ENCODE measurements at regions of chr2 and their contacts with region 1.

Region 1: DNA sequence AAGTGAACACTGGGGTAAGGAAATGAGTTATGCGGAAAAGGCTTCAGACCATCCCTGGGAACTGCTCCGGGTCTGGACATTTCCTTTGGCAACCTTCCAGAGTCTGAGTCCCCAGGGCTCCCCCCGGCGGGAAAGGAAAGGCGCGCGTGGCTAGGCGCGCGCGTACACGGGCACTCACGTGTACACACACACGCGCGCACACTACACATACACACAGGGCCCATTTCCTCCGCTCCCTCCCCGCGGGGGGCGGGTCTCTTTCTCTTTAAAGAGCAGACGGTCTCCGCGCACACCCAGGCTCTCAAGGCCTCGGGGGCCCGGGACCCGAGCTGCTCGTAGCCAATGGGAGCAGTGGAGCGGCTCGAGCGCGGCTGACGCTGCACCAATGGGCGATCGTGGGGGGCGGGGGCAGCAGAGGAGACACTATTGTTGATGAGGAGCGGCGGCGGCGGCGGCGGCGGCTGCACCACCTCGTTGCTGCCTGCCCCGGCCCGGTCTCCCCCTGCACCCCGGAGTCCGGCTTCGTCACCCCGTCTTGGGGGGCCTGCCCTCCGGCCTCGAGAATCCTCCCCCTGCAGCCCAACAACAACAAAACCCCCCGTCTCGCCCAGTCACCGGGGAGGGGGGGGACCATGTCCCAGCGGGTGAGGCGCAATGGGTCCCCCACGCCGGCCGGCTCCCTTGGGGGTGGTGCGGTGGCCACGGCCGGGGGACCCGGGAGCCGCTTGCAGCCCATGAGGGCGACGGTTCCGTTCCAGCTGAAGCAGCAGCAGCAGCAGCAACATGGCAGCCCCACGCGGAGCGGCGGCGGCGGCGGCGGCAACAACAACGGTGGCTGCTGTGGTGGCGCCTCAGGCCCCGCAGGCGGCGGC is at the start of gene FAM117B:
- DNase-seq: peak; percentile 97 to 99 (median 98)
- ATAC-seq: peak; percentile 87
- H3K4me3 ChIP-seq: peak within 1 kb of the TSS; percentile 77 to 87
- H3K4me3 Mint-ChIP-seq: peak within 1 kb of the TSS; percentile 98
- H3K27ac ChIP-seq: peak within 1 kb of the TSS; percentile 76 to 89
- H3K27ac Mint-ChIP-seq: peak within 1 kb of the TSS; percentile 99
- H3K4me1 ChIP-seq: peaks cover 29% of the 10 kb centered on the region
- H3K4me1 Mint-ChIP-seq: peaks cover 52% of the 10 kb centered on the region
- H3K27me3 ChIP-seq: no peaks in the 10 kb centered on the region
- H3K27me3 Mint-ChIP-seq: no peaks in the 10 kb centered on the region
- CTCF ChIP-seq: no peak
- total RNA-seq, gene FAM117B: 40.0 to 45.8 TPM

Region 2: DNA sequence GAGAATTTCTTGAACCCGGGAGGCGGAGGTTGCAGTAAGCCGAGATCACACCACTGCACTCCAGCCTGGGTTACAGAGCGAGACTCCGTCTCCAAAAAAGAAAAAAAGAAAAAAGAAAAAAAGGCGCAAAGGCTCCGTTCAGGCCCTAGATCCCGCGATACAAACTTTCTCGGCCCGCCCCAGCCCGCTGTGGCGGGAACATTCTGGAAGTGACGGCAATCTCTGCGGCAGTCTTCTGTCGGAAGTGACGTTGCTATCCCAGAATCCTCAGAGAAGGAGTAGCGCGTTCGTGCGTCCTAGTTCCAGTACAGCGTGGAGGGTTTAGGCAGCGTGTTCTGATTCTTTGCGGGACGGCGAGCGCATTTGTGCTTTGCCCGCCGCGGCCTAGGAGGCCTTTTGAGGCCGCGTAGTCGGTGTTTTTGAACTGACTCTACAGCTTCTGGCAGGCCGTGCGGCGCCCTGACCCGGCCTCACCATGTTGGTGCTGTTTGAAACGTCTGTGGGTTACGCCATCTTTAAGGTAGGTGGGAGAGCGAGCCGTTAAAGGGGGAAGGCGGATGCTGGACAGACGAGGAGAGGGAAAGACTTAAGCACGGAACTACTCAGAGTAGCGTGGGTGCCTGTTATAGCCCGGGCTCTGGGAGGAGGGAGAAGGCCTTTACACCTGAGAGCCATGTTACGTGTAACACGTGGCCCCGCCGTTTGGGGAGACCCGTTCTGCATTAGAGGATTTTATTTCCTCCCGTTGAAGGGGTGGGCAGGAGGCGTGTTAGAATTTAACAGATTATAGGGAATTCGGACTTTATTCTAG is 369.1 kb before region 1 on chr2 and contains the start of gene NOP58:
- CTCF ChIA-PET with region 1: no interaction called
- POLR2A ChIA-PET with region 1: no interaction called
- intact Hi-C with region 1: loop called in 1 of 2 experiments (anchors 10 kb)
- DNase-seq: peak; percentile 80 to 97 (median 87)
- ATAC-seq: peak; percentile 75
- H3K4me3 ChIP-seq: peak within 1 kb of the TSS; percentile 80 to 100
- H3K4me3 Mint-ChIP-seq: peak within 1 kb of the TSS; percentile 52
- H3K27ac ChIP-seq: peak within 1 kb of the TSS; percentile 97 to 98
- H3K27ac Mint-ChIP-seq: peak within 1 kb of the TSS; percentile 43
- H3K4me1 ChIP-seq: peaks cover 18% of the 10 kb centered on the region
- H3K4me1 Mint-ChIP-seq: peaks cover 21% of the 10 kb centered on the region
- H3K27me3 ChIP-seq: no peaks in the 10 kb centered on the region
- H3K27me3 Mint-ChIP-seq: no peaks in the 10 kb centered on the region
- CTCF ChIP-seq: no peak
- total RNA-seq, gene NOP58: 345 to 352 TPM

Region 3: DNA sequence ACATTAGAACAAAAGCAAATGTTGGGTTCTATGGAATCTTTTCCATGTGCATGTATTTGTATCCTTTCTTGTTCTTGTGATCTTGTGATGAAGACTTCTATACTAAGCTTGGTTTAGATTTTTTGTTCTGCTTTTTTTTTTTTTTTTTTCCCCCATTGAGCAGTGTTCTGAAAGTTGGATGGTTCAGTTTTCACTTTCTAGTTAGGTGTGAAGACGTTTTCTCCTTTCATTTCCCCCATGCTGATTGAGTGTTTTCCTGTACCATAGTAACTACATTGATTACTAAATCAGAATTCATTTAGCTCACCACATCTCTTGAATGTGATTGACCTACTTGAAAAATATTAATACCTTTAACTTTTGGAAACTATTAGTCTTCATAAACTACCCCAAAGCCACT is 335.1 kb before region 1 on chr2:
- CTCF ChIA-PET with region 1: no interaction called
- POLR2A ChIA-PET with region 1: no interaction called
- intact Hi-C with region 1: no loop called
- DNase-seq: no peak
- ATAC-seq: no peak
- H3K4me3 ChIP-seq: no peak overlapping the region
- H3K4me3 Mint-ChIP-seq: no peak overlapping the region
- H3K27ac ChIP-seq: no peak overlapping the region
- H3K27ac Mint-ChIP-seq: no peak overlapping the region
- H3K4me1 ChIP-seq: no peaks in the 10 kb centered on the region
- H3K4me1 Mint-ChIP-seq: peaks cover 2% of the 10 kb centered on the region
- H3K27me3 ChIP-seq: no peaks in the 10 kb centered on the region
- H3K27me3 Mint-ChIP-seq: no peaks in the 10 kb centered on the region
- CTCF ChIP-seq: no peak

Region 4: DNA sequence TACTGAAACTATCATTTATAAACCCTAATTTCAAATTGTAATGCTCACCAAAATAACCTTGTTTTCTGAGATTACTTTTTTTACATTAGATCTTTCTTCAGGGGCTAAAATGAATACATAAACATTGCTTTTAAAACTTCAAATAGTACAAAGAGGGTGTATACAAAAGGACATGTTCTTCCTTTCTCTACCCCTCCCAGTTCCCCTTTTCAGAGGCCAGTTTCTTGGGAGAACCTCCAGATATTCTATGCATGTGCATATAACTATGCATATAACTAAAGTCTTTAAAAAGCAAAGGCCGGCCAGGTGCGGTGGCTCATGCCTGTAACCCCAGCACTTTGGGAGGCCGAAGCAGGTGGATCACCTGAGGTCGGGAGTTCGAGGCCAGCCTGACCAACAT is 10.7 kb before region 1 on chr2:
- CTCF ChIA-PET with region 1: no interaction called
- POLR2A ChIA-PET with region 1: no interaction called
- intact Hi-C with region 1: no loop called
- DNase-seq: no peak
- ATAC-seq: no peak
- H3K4me3 ChIP-seq: no peak overlapping the region
- H3K4me3 Mint-ChIP-seq: no peak overlapping the region
- H3K27ac ChIP-seq: no peak overlapping the region
- H3K27ac Mint-ChIP-seq: no peak overlapping the region
- H3K4me1 ChIP-seq: peaks cover 21% of the 10 kb centered on the region
- H3K4me1 Mint-ChIP-seq: peaks cover 4% of the 10 kb centered on the region
- H3K27me3 ChIP-seq: no peaks in the 10 kb centered on the region
- H3K27me3 Mint-ChIP-seq: no peaks in the 10 kb centered on the region
- CTCF ChIP-seq: no peak

Region 5: GRCh38 chr2:202653890-202654289 is 19.1 kb after region 1 on chr2:
- CTCF ChIA-PET with region 1: interaction called, 7 read pairs
- POLR2A ChIA-PET with region 1: interaction called, 13 read pairs
- intact Hi-C with region 1: loop called in 1 of 2 experiments (anchors 2 kb)
- DNase-seq: peak in 1 of 9 experiments; percentile 35
- ATAC-seq: no peak
- H3K4me3 ChIP-seq: no peak overlapping the region
- H3K4me3 Mint-ChIP-seq: peak overlapping the region; percentile 9
- H3K27ac ChIP-seq: no peak overlapping the region
- H3K27ac Mint-ChIP-seq: peak overlapping the region; percentile 85
- H3K4me1 ChIP-seq: peaks cover 74% of the 10 kb centered on the region
- H3K4me1 Mint-ChIP-seq: peaks cover 86% of the 10 kb centered on the region
- H3K27me3 ChIP-seq: peaks cover 0 to 2% of the 10 kb centered on the region in 2 experiments
- H3K27me3 Mint-ChIP-seq: no peaks in the 10 kb centered on the region
- CTCF ChIP-seq: no peak

Region 6: DNA sequence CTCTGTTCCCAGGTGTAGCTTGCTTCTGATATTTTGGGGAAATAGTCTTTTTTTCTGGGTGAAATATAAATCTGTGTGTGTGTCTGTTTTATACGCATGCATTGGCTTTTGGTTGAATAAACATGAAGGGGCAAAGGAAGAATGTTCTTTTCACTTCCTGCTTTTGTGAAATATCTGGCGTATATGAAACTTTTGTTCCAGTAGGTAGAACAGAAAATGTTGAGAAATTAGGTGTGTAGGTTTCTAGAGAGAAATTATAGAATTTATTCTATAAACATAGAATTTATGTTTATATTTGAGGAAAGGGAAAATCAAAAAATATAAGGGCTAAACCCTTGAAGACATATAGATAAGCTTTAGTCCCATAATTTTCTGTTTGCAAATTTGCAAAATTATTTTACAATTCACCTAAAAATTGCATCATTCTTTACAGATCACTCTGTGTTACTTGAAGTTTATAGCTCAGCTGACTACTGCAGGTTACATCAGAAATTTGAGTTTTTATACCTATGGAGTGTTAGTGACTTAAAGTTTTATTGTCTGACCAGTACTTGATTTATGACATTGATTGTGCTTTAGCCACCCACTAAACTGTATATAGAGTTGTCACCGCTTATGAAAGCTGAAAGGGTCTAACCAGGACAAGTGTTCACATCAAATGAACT is 116.1 kb after region 1 on chr2:
- CTCF ChIA-PET with region 1: no interaction called
- POLR2A ChIA-PET with region 1: interaction called, 33 read pairs
- intact Hi-C with region 1: no loop called
- DNase-seq: no peak
- ATAC-seq: peak; percentile 55
- H3K4me3 ChIP-seq: no peak overlapping the region
- H3K4me3 Mint-ChIP-seq: peak overlapping the region; percentile 26
- H3K27ac ChIP-seq: peak overlapping the region in 1 of 2 experiments; percentile 29
- H3K27ac Mint-ChIP-seq: peak overlapping the region; percentile 84
- H3K4me1 ChIP-seq: peaks cover 24% of the 10 kb centered on the region
- H3K4me1 Mint-ChIP-seq: peaks cover 57% of the 10 kb centered on the region
- H3K27me3 ChIP-seq: no peaks in the 10 kb centered on the region
- H3K27me3 Mint-ChIP-seq: no peaks in the 10 kb centered on the region
- CTCF ChIP-seq: no peak

Region 7: GRCh38 chr2:202911512-202912341 is 276.9 kb after region 1 on chr2 and contains the starts of genes CARF and WDR12:
- CTCF ChIA-PET with region 1: interaction called, 3 read pairs
- POLR2A ChIA-PET with region 1: interaction called, 19 read pairs
- intact Hi-C with region 1: loop called (anchors 1 kb)
- DNase-seq: peak; percentile 77 to 96 (median 90)
- ATAC-seq: peak; percentile 81
- H3K4me3 ChIP-seq: peak within 1 kb of the TSS; percentile 89 to 98
- H3K4me3 Mint-ChIP-seq: peak within 1 kb of the TSS; percentile 96
- H3K27ac ChIP-seq: peak within 1 kb of the TSS; percentile 70 to 92
- H3K27ac Mint-ChIP-seq: peak within 1 kb of the TSS; percentile 92
- H3K4me1 ChIP-seq: peaks cover 17% of the 10 kb centered on the region
- H3K4me1 Mint-ChIP-seq: peaks cover 42% of the 10 kb centered on the region
- H3K27me3 ChIP-seq: no peaks in the 10 kb centered on the region
- H3K27me3 Mint-ChIP-seq: no peaks in the 10 kb centered on the region
- CTCF ChIP-seq: no peak
- total RNA-seq, gene CARF: 6.3 to 8.7 TPM
- total RNA-seq, gene WDR12: 4.7 to 6.4 TPM